MCF 10A (cell line): ENCODE measurements at regions of chr5 and their contacts with region 1.

Region 1: DNA sequence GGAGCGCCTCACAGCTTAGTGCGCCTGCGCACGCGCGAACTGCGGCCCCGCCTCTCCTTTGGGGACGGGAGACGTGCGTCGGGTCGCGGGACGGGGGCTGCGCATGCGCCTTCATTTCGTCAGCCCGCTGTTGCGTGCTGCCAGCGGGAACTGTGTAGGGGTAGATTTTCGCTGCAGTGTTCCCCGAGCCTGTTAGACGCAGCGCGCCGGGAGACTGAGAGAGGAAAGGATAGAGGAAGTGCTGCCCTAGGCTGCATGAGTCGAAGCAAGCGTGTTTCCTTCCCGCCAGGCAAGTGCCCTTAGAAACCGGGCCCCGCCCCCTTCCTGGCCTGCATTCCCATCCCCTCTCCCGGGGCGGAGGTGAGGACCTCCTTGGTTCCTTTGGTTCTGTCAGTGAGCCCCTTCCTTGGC is 12.3 kb downstream of the ITGA1 start:
- DNase-seq: peak; percentile 94
- H3K4me3 Mint-ChIP-seq: peak overlapping the region; percentile 92
- H3K27ac Mint-ChIP-seq: peak overlapping the region; percentile 90
- H3K4me1 Mint-ChIP-seq: peaks cover 38% of the 10 kb centered on the region
- H3K27me3 Mint-ChIP-seq: no peaks in the 10 kb centered on the region
- CTCF ChIP-seq: no peak

Region 2: DNA sequence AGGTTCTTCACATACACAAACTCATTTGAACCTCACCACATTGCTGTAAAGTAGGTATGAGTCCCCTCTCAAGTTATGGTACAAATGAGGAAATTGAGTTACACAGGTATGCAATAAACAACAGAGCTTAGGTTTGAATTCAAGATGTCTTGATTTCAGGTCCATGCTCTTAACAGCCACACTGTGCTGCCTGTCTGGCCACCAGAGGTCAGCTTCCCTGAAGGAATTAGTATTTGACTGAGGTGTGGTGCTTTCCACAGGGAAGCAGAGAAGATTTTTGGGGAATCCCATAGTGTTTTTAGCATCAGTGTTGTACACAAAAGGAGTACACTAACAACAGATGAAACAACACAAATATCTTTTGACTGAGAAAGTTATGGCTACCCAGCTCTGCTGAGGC is 106.7 kb before region 1 on chr5:
- CTCF ChIA-PET with region 1: interaction called, 10 read pairs
- POLR2A ChIA-PET with region 1: interaction called, 3 read pairs
- intact Hi-C with region 1: no loop called
- DNase-seq: peak; percentile 55
- H3K4me3 Mint-ChIP-seq: no peak overlapping the region
- H3K27ac Mint-ChIP-seq: no peak overlapping the region
- H3K4me1 Mint-ChIP-seq: no peaks in the 10 kb centered on the region
- H3K27me3 Mint-ChIP-seq: peaks cover 57% of the 10 kb centered on the region
- CTCF ChIP-seq: peak; percentile 41

Region 3: GRCh38 chr5:52727568-52727967 is 72.4 kb before region 1 on chr5:
- CTCF ChIA-PET with region 1: no interaction called
- POLR2A ChIA-PET with region 1: no interaction called
- intact Hi-C with region 1: no loop called
- DNase-seq: peak; percentile 79
- H3K4me3 Mint-ChIP-seq: peak overlapping the region; percentile 35
- H3K27ac Mint-ChIP-seq: peak overlapping the region; percentile 11
- H3K4me1 Mint-ChIP-seq: peaks cover 11% of the 10 kb centered on the region
- H3K27me3 Mint-ChIP-seq: no peaks in the 10 kb centered on the region
- CTCF ChIP-seq: no peak

Region 4: DNA sequence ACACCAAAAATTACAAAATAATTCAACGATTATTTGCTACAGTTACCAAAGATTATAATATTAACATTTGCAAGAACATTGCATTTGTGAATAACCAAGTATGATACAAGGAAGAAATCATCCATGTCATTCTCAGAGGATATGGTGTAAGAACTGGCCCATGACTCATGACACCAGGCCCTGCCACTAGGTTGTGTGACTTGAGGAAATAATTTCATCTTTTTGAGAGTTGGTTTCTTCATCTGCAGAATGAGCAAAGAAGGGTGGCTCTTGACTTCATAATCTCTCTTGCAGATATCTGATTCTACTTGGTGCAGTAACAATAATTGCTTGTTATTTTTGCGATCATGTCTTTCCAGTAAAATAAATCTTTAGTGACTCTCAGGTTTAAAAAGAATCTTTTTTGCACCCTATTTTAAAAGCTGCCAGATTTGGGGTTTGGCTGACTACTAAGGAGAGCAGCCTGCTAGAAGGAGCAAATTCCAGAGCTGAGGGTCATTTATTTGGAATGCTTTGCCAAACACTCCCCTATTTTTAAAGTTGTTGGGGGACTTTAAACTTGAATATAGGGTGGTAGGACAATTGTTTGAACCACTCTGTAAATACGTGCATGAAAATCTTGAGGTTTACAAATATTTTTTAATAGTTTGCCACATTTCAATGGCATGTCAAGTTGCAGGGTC is 11.2 kb after region 1 on chr5:
- CTCF ChIA-PET with region 1: interaction called, 5 read pairs
- POLR2A ChIA-PET with region 1: interaction called, 51 read pairs
- intact Hi-C with region 1: no loop called
- DNase-seq: peak; percentile 79
- H3K4me3 Mint-ChIP-seq: no peak overlapping the region
- H3K27ac Mint-ChIP-seq: no peak overlapping the region
- H3K4me1 Mint-ChIP-seq: peaks cover 13% of the 10 kb centered on the region
- H3K27me3 Mint-ChIP-seq: no peaks in the 10 kb centered on the region
- CTCF ChIP-seq: no peak

Region 5: DNA sequence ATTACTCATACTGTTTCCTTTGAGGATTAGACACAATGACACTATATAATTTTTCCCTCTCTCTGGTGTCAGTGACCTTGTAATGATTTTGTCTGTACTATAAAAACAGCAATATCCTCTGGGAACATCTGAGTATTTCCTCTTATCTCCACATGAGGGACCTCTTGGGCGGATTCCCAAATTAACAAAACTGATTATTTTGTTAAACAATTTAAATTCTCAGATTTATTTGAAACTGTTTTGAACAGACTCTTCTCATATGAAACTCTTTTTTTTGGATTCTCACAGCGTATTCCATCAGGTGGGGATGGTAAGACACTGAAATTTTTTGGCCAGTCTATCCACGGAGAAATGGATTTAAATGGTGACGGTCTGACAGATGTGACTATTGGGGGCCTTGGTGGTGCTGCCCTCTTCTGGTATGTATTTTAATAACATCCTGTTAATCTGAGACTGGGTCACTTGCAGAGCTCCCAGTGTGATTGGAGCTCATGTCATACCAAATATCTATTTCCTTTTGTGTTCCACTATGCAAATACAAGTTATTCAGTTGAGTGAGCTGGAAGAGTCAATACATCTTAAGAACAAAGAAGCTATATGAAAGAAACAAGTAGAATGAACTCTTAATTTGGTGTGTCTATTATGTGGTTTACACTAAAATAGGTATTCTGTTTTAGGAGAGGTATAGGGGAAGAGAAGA is 115.3 kb after region 1 on chr5:
- CTCF ChIA-PET with region 1: interaction called, 17 read pairs
- POLR2A ChIA-PET with region 1: interaction called, 5 read pairs
- intact Hi-C with region 1: loop called (anchors 1 kb)
- DNase-seq: peak; percentile 82
- H3K4me3 Mint-ChIP-seq: peak overlapping the region; percentile 68
- H3K27ac Mint-ChIP-seq: no peak overlapping the region
- H3K4me1 Mint-ChIP-seq: no peaks in the 10 kb centered on the region
- H3K27me3 Mint-ChIP-seq: no peaks in the 10 kb centered on the region
- CTCF ChIP-seq: peak; percentile 78